GM13977 (cell line): ENCODE measurements at regions of chr5 and their contacts with region 1.

Region 1: DNA sequence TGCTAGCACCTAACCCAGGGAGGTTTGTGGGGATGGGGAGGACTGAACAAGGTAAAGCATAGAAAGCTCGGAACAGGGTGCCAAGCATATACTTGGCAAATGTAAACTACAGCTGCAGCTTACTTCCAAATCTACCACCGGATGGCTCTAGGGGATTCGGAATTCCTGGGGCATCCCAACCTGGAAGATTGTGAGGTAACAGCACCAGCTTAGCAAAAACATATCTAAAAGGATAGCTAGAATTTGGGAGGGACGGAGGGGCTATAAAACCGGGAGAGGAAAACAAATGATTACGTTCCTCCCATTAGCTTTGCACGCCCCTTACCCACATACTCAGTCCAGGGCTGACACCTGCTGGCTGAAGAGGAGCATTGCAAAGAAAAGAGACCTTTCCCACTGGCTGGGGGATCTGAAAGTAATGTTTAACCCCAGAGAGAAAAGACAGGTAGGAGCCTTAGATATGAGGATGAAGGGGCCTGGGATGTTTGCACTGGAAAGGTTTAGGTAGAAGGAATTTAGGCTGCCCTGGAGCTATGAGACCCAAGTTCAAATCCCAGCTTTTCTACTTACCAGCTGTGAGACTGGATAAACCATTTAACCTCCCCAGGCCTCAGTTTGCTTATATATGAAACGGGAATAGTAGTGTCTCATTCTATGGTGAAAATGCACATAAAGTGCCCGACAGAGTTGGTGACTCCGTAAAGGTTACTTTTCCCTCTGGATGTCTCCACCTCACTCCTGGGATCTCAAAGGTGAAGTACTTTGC is 73.6 kb downstream of the FAM114A2 start:
- DNase-seq: peak; percentile 82
- CTCF ChIP-seq: peak; percentile 96

Region 2: DNA sequence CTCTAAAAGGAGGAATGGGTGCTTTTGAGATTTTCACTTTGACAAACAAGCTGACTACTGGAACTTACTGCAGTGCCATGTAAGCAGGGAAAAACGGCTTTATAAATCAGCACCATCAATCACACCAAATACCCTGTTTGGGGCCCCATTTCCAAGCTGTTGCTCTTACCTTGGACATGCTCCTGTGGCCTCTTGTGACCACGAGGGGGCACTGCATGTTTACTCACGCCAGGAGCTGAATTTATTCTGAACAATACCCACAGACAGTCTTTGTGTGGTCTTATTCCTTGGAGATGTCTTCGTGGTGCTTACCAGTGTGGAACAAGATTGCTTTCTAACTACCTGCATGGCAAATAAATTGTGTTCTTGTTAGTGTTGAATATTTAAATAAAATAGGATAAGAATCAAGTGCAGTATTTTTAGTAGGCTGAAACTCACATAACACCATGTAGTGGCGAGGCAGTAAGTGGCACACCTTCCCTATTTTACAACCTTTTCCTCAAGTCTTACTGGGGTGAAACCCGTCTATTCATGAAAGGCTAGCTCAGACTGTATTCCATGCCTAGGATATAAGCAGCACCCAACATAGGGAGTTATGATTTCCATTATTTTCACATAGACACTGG is 1404.4 kb before region 1 on chr5:
- in situ Hi-C with region 1: loop called (anchors 10 kb)
- DNase-seq: peak; percentile 38
- CTCF ChIP-seq: peak; percentile 82

Region 3: GRCh38 chr5:153523831-153524230 is 441.2 kb before region 1 on chr5:
- in situ Hi-C with region 1: loop called (anchors 25 kb)
- DNase-seq: no peak
- CTCF ChIP-seq: no peak